ENCODE measurements at regions of chr11 and their contacts with region 1.

Region 1: GRCh38 chr11:2975594-2975993 is 16.5 kb downstream of the NAP1L4 start:
- DNase-seq: peak; percentile 44
- H3K4me3 ChIP-seq: no peak overlapping the region
- H3K27ac ChIP-seq: no peak overlapping the region
- H3K4me1 ChIP-seq: no peaks in the 10 kb centered on the region
- H3K27me3 ChIP-seq: no peaks in the 10 kb centered on the region
- CTCF ChIP-seq: peak; percentile 53
- EP300 ChIP-seq: no peak
- RAD21 ChIP-seq: peak; percentile 70

Region 2: GRCh38 chr11:2961080-2961479 is 14.5 kb before region 1 on chr11:
- CTCF ChIA-PET with region 1: interaction called, 10 read pairs
- POLR2A ChIA-PET with region 1: no interaction called
- DNase-seq: no peak
- H3K4me3 ChIP-seq: no peak overlapping the region
- H3K27ac ChIP-seq: no peak overlapping the region
- H3K4me1 ChIP-seq: no peaks in the 10 kb centered on the region
- H3K27me3 ChIP-seq: no peaks in the 10 kb centered on the region
- CTCF ChIP-seq: no peak
- EP300 ChIP-seq: no peak
- RAD21 ChIP-seq: no peak

Region 3: GRCh38 chr11:2990617-2991451 is 15.2 kb after region 1 on chr11:
- CTCF ChIA-PET with region 1: interaction called, 13 read pairs
- POLR2A ChIA-PET with region 1: no interaction called
- DNase-seq: no peak
- H3K4me3 ChIP-seq: peak overlapping the region; percentile 89 to 97
- H3K27ac ChIP-seq: peak overlapping the region; percentile 81 to 82
- H3K4me1 ChIP-seq: peaks cover 9 to 26% of the 10 kb centered on the region in 2 experiments; a peak in 3 of 4 replicates
- H3K27me3 ChIP-seq: no peaks in the 10 kb centered on the region
- CTCF ChIP-seq: no peak
- EP300 ChIP-seq: no peak
- RAD21 ChIP-seq: no peak

Region 4: DNA sequence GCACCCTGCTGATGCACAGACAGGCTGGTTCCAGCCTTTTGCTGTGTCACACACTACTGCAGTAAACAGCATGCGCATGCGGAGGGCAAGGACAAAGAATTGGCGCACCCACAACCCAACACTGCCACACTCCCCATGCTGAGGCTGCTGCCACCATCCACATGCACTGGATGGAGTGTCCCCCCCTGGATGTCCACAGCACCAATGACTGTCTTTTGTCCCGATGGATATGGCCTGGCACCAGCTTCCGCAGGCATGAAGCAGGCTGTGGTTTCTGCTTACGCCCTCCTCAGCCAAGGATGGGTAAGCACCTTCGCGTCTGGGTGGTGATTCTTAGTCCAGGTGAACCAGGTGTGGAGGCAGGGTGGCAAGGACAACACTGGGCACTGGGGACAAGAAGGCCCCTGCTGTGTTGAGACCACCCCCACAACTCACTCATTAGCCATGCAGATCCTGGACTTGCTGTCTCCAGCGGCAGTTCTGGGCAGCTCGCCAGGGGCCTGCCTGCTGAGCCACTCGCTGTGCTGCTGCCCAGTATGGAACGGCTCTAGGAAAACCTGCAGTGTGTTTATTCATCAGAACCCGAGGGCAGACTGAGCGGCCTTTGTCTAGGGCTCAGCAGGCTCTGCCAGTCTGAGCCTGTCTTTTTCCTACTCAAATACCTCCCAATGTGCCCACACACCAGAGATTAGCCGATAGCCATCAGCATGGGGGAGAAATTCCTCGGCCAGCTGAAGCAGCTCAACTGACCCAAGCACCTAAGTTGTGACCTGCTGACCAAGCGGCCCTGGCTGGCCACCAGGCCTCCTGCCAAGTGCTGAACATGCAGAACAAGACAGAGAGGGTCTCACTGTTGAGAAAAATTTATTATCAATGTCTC is 24.7 kb after region 1 on chr11:
- CTCF ChIA-PET with region 1: interaction called, 13 read pairs
- POLR2A ChIA-PET with region 1: no interaction called
- DNase-seq: peak; percentile 88
- H3K4me3 ChIP-seq: no peak overlapping the region; a peak in 1 of 4 replicates
- H3K27ac ChIP-seq: peak overlapping the region; percentile 55 to 98
- H3K4me1 ChIP-seq: peaks cover 19 to 43% of the 10 kb centered on the region in 2 experiments
- H3K27me3 ChIP-seq: no peaks in the 10 kb centered on the region
- CTCF ChIP-seq: no peak
- EP300 ChIP-seq: peak; percentile 32 to 40; a peak in 1 of 4 replicates
- RAD21 ChIP-seq: 0 out of 2 replicates have a peak, but pooled peaks have one; percentile 12

Measured in SK-N-SH (cell line).